Posterior cingulate gyrus (tissue), 11 donors: ENCODE measurements at regions of chr4 and their contacts with region 1.

Region 1: GRCh38 chr4:83455281-83456129 is at the starts of genes HELQ and MRPS18C:
- DNase-seq: peak; percentile 90 to 99 (median 95)

Region 2: GRCh38 chr4:83484500-83485461 is 29.3 kb after region 1 on chr4 and contains the start of gene ABRAXAS1:
- intact Hi-C with region 1: loop called (anchors 2 kb)
- DNase-seq: peak; percentile 85 to 99 (median 92)

Region 3: GRCh38 chr4:83522239-83522638 is 66.7 kb after region 1 on chr4:
- intact Hi-C with region 1: no loop called
- DNase-seq: no peak

Region 4: DNA sequence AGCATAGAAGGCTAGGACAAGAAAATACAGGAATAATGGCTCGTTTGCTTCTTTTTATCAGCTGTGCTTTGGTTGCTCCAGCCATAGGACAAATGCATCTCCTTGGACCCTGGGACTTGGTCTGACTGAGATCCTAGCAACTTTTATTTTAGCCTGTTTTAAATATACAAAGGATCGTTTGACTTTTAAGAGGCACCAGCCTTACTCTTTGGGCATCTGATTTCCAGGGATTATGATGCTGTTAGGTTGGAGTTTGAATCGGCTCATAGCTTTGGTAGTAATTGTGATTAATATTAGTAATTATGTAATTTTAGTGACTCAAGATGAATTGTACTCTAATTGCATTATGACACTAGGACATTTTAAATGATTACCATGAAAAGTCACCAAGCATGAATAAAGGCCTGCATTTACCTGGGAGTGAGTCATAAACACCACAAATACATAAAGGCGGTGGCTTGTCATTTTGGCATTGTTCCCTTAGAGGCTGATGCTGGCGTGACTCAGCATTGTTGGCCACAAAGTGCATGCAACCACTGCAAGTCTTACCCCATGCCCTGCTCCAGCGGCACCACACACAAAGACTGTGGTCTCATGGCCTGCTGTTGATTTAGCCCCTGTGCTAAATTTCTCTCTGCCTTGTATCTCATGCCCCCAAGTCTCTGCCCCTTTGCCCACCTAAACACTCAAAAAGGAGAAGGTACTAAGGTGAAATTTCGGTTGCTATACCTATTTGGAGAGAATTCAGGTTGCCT is 92.8 kb after region 1 on chr4:
- intact Hi-C with region 1: no loop called
- DNase-seq: no peak

Region 5: GRCh38 chr4:84719115-84719514 is 1263.6 kb after region 1 on chr4:
- intact Hi-C with region 1: no loop called
- DNase-seq: no peak